ENCODE measurements at regions of chr9 and their contacts with region 1.

Region 1: DNA sequence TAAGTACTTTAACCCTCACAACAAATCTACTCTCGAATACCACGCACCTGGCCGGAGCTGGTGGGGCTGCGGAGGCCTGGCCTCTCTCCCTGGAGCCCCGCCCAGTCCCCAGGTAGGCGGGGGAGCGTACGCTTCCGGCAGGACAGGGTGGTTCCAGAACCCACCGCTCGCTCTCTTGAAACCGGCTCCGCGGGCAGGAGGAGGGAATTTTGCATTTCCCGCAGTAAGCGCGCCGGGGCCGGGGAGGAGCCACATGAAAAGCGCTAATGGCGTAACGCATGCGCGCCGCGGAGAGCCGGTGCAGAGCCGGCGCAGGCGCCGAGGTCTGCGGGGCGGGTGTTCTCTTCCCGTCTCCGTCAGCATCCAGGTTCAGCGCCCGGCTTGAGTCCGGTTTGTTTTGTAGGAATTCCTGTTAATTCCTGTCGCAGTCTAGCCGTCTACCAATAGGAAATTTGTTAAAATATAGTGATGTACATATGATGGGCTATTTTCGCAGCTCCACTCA is 20.8 kb downstream of the CAVIN4 start:
- DNase-seq: peak; percentile 66 to 91 (median 76)
- ATAC-seq: peak; percentile 84
- H3K4me3 ChIP-seq: peak overlapping the region; percentile 62
- H3K4me3 Mint-ChIP-seq: peak overlapping the region; percentile 81
- H3K27ac ChIP-seq: peak overlapping the region in 1 of 2 donors; percentile 45
- H3K27ac Mint-ChIP-seq: peak overlapping the region; percentile 63
- H3K4me1 ChIP-seq: peaks cover 18% of the 10 kb centered on the region
- H3K4me1 Mint-ChIP-seq: peaks cover 33% of the 10 kb centered on the region
- H3K27me3 ChIP-seq: no peaks in the 10 kb centered on the region
- H3K27me3 Mint-ChIP-seq: no peaks in the 10 kb centered on the region
- CTCF ChIP-seq: no peak

Region 2: GRCh38 chr9:99184475-99185347 is 1414.0 kb before region 1 on chr9:
- CTCF ChIA-PET with region 1: no interaction called
- POLR2A ChIA-PET with region 1: no interaction called
- intact Hi-C with region 1: loop called (anchors 10 kb)
- DNase-seq: peak; percentile 56 to 87 (median 66)
- ATAC-seq: peak; percentile 93
- H3K4me3 ChIP-seq: peak overlapping the region; percentile 29
- H3K4me3 Mint-ChIP-seq: no peak overlapping the region
- H3K27ac ChIP-seq: no peak overlapping the region
- H3K27ac Mint-ChIP-seq: no peak overlapping the region
- H3K4me1 ChIP-seq: peaks cover 12% of the 10 kb centered on the region
- H3K4me1 Mint-ChIP-seq: peaks cover 18% of the 10 kb centered on the region
- H3K27me3 ChIP-seq: no peaks in the 10 kb centered on the region
- H3K27me3 Mint-ChIP-seq: peaks cover 6% of the 10 kb centered on the region
- CTCF ChIP-seq: peak; percentile 97

Region 3: GRCh38 chr9:99807276-99807852 is 791.3 kb before region 1 on chr9:
- CTCF ChIA-PET with region 1: no interaction called
- POLR2A ChIA-PET with region 1: no interaction called
- intact Hi-C with region 1: loop called in 1 of 2 experiments (anchors 5 kb)
- DNase-seq: peak; percentile 53 to 85 (median 59)
- ATAC-seq: peak; percentile 84
- H3K4me3 ChIP-seq: no peak overlapping the region
- H3K4me3 Mint-ChIP-seq: no peak overlapping the region
- H3K27ac ChIP-seq: no peak overlapping the region
- H3K27ac Mint-ChIP-seq: no peak overlapping the region
- H3K4me1 ChIP-seq: no peaks in the 10 kb centered on the region
- H3K4me1 Mint-ChIP-seq: no peaks in the 10 kb centered on the region
- H3K27me3 ChIP-seq: no peaks in the 10 kb centered on the region
- H3K27me3 Mint-ChIP-seq: peaks cover 4% of the 10 kb centered on the region
- CTCF ChIP-seq: peak; percentile 95

Region 4: DNA sequence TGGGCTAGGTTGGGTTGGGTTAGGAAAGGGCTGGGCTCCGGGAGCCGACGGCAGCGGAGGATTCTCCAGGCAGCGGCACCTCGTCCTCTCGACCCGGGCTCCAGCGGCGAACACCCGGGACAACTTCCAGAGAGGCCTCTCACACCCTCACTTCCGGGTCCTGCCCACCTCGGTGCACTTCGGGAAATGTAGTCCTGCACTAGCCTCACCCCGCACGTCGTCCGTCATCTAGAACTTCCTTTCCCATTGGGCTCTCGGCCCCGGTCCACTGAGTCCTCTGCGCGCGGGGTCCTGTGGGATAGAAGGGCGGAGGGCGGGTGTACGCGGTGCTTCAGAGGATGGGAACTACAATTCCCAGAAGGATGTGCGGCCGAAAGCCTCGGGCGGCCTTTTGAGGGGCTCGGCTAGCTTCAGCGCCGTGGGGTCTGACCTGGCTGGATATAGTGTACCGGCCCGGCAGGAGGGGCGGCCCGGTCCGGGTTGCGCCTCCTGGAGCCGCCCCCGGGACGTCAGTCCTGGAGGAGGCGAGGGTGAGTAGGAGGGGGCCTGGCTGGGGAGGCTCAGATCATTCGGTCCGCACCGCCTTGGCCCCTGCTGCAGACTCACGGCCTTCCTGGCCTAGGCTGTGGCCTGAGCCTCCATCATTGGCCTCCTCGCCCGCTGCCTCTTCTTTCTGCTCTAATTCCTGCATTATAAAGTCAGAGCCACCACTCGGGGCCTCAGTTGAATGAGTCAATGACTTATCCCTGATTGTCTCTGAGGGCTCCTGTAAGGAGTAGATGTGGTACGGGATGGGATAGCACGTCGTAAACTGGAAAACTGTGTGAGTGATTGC is 499.6 kb before region 1 on chr9 and contains the starts of genes ERP44 and INVS:
- CTCF ChIA-PET with region 1: no interaction called
- POLR2A ChIA-PET with region 1: no interaction called
- intact Hi-C with region 1: loop called in 1 of 2 experiments (anchors 5 kb)
- DNase-seq: peak; percentile 91 to 99 (median 95)
- ATAC-seq: peak; percentile 99
- H3K4me3 ChIP-seq: peak within 1 kb of the TSS; percentile 78
- H3K4me3 Mint-ChIP-seq: peak within 1 kb of the TSS; percentile 96
- H3K27ac ChIP-seq: peak within 1 kb of the TSS; percentile 58 to 80
- H3K27ac Mint-ChIP-seq: peak within 1 kb of the TSS; percentile 89
- H3K4me1 ChIP-seq: peaks cover 20% of the 10 kb centered on the region
- H3K4me1 Mint-ChIP-seq: peaks cover 50% of the 10 kb centered on the region
- H3K27me3 ChIP-seq: no peaks in the 10 kb centered on the region
- H3K27me3 Mint-ChIP-seq: no peaks in the 10 kb centered on the region
- CTCF ChIP-seq: no peak
- total RNA-seq, gene ERP44: 6.8 to 7.1 TPM
- total RNA-seq, gene INVS: 13.6 to 14.3 TPM

Region 5: GRCh38 chr9:100426530-100427428 is 171.9 kb before region 1 on chr9 and contains the start of gene MSANTD3:
- CTCF ChIA-PET with region 1: no interaction called
- POLR2A ChIA-PET with region 1: no interaction called
- intact Hi-C with region 1: loop called in 1 of 2 experiments (anchors 5 kb)
- DNase-seq: peak; percentile 28 to 79 (median 54)
- ATAC-seq: peak; percentile 80
- H3K4me3 ChIP-seq: peak within 1 kb of the TSS; percentile 78
- H3K4me3 Mint-ChIP-seq: peak within 1 kb of the TSS; percentile 98
- H3K27ac ChIP-seq: peak within 1 kb of the TSS in 1 of 2 donors; percentile 0
- H3K27ac Mint-ChIP-seq: peak within 1 kb of the TSS; percentile 96
- H3K4me1 ChIP-seq: peaks cover 20% of the 10 kb centered on the region
- H3K4me1 Mint-ChIP-seq: peaks cover 44% of the 10 kb centered on the region
- H3K27me3 ChIP-seq: peaks cover 0 to 7% of the 10 kb centered on the region in 2 experiments
- H3K27me3 Mint-ChIP-seq: peaks cover 7% of the 10 kb centered on the region
- CTCF ChIP-seq: no peak
- total RNA-seq, gene MSANTD3: 8.8 to 9.6 TPM

Region 6: GRCh38 chr9:100869321-100869720 is 270.6 kb after region 1 on chr9:
- CTCF ChIA-PET with region 1: no interaction called
- POLR2A ChIA-PET with region 1: no interaction called
- intact Hi-C with region 1: no loop called
- DNase-seq: no peak
- ATAC-seq: no peak
- H3K4me3 ChIP-seq: no peak overlapping the region
- H3K4me3 Mint-ChIP-seq: no peak overlapping the region
- H3K27ac ChIP-seq: no peak overlapping the region
- H3K27ac Mint-ChIP-seq: no peak overlapping the region
- H3K4me1 ChIP-seq: no peaks in the 10 kb centered on the region
- H3K4me1 Mint-ChIP-seq: no peaks in the 10 kb centered on the region
- H3K27me3 ChIP-seq: no peaks in the 10 kb centered on the region
- H3K27me3 Mint-ChIP-seq: no peaks in the 10 kb centered on the region
- CTCF ChIP-seq: no peak

Region 7: GRCh38 chr9:101398068-101398929 is 799.6 kb after region 1 on chr9 and contains the starts of genes MRPL50 and ZNF189:
- CTCF ChIA-PET with region 1: no interaction called
- POLR2A ChIA-PET with region 1: interaction called, 3 read pairs
- intact Hi-C with region 1: loop called in 1 of 2 experiments (anchors 10 kb)
- DNase-seq: peak; percentile 90 to 99 (median 94)
- ATAC-seq: peak; percentile 94
- H3K4me3 ChIP-seq: peak within 1 kb of the TSS; percentile 81
- H3K4me3 Mint-ChIP-seq: peak within 1 kb of the TSS; percentile 99
- H3K27ac ChIP-seq: peak within 1 kb of the TSS; percentile 87 to 92
- H3K27ac Mint-ChIP-seq: peak within 1 kb of the TSS; percentile 99
- H3K4me1 ChIP-seq: peaks cover 32% of the 10 kb centered on the region
- H3K4me1 Mint-ChIP-seq: peaks cover 86% of the 10 kb centered on the region
- H3K27me3 ChIP-seq: no peaks in the 10 kb centered on the region
- H3K27me3 Mint-ChIP-seq: no peaks in the 10 kb centered on the region
- CTCF ChIP-seq: no peak
- total RNA-seq, gene MRPL50: 5.9 to 6.1 TPM
- total RNA-seq, gene ZNF189: 5.0 to 5.3 TPM

Measured in CD4-positive, alpha-beta T cell (primary cell).